B cell (primary cell): ENCODE measurements at regions of chr10 and their contacts with region 1.

Region 1: DNA sequence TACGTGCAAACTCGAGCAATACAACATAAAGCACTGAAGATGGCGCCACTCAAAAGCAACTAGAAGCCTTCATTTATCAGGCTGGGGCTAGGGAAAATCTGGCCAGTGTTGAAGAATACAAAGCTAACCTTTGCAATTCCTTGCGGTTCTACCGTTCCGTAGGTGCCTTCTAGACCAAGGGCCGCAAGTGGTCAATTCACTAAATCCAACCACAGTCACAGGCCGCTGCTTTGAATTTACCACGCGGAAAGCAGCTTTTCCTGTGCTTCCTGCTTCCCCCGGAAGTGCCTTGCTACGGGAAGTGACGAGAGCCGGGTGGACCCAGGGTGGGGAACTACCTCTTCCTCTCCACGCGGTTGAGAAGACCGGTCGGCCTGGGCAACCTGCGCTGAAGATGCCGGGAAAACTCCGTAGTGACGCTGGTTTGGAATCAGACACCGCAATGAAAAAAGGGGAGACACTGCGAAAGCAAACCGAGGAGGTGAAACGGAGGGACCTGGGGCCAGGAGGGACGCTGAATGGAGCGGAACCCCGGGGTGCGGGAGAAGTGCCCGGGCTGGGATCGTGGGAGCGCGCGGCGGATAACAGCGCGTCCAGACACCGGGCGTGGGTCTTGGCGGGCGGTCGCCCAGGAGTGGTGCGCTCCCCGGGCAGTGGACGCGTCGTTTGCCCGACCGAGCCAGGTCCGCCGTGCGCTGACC is at the start of gene DDX21:
- DNase-seq: peak; percentile 93
- ATAC-seq: peak; percentile 82
- H3K4me3 ChIP-seq: peak within 1 kb of the TSS; percentile 92 to 99 (median 95)
- H3K4me3 Mint-ChIP-seq: peak within 1 kb of the TSS; percentile 94
- H3K27ac ChIP-seq: peak within 1 kb of the TSS; percentile 97 to 99
- H3K27ac Mint-ChIP-seq: peak within 1 kb of the TSS; percentile 95
- H3K4me1 ChIP-seq: peaks cover 7 to 32% of the 10 kb centered on the region in 2 donors
- H3K4me1 Mint-ChIP-seq: peaks cover 34% of the 10 kb centered on the region
- H3K27me3 ChIP-seq: no peaks in the 10 kb centered on the region
- H3K27me3 Mint-ChIP-seq: no peaks in the 10 kb centered on the region
- CTCF ChIP-seq: peak; percentile 88
- total RNA-seq, gene DDX21: 40.5 and 43.5 TPM in 2 replicates

Region 2: GRCh38 chr10:68331455-68332258 is 624.3 kb before region 1 on chr10 and contains the start of gene HNRNPH3:
- CTCF ChIA-PET with region 1: no interaction called
- POLR2A ChIA-PET with region 1: interaction called, 3 read pairs
- intact Hi-C with region 1: loop called (anchors 1 kb)
- DNase-seq: peak; percentile 100
- ATAC-seq: peak; percentile 84
- H3K4me3 ChIP-seq: peak within 1 kb of the TSS; percentile 77 to 95 (median 90)
- H3K4me3 Mint-ChIP-seq: peak within 1 kb of the TSS; percentile 99
- H3K27ac ChIP-seq: peak within 1 kb of the TSS; percentile 93 to 94
- H3K27ac Mint-ChIP-seq: peak within 1 kb of the TSS; percentile 100
- H3K4me1 ChIP-seq: peaks cover 42 to 51% of the 10 kb centered on the region in 2 donors
- H3K4me1 Mint-ChIP-seq: peaks cover 62% of the 10 kb centered on the region
- H3K27me3 ChIP-seq: no peaks in the 10 kb centered on the region
- H3K27me3 Mint-ChIP-seq: no peaks in the 10 kb centered on the region
- CTCF ChIP-seq: no peak
- total RNA-seq, gene HNRNPH3: 120 and 124 TPM in 2 replicates

Region 3: GRCh38 chr10:68720793-68721672 is 234.9 kb before region 1 on chr10 and contains the start of gene CCAR1:
- CTCF ChIA-PET with region 1: no interaction called
- POLR2A ChIA-PET with region 1: no interaction called
- intact Hi-C with region 1: loop called (anchors 2 kb)
- DNase-seq: peak; percentile 99
- ATAC-seq: peak; percentile 97
- H3K4me3 ChIP-seq: peak within 1 kb of the TSS; percentile 58 to 96 (median 93)
- H3K4me3 Mint-ChIP-seq: peak within 1 kb of the TSS; percentile 96
- H3K27ac ChIP-seq: peak within 1 kb of the TSS; percentile 81 to 95
- H3K27ac Mint-ChIP-seq: peak within 1 kb of the TSS; percentile 97
- H3K4me1 ChIP-seq: peaks cover 10 to 15% of the 10 kb centered on the region in 2 donors
- H3K4me1 Mint-ChIP-seq: peaks cover 17% of the 10 kb centered on the region
- H3K27me3 ChIP-seq: no peaks in the 10 kb centered on the region
- H3K27me3 Mint-ChIP-seq: no peaks in the 10 kb centered on the region
- CTCF ChIP-seq: no peak
- total RNA-seq, gene CCAR1: 98.9 and 101 TPM in 2 replicates

Region 4: GRCh38 chr10:68988530-68989316 is 32.7 kb after region 1 on chr10 and contains the start of gene KIFBP:
- CTCF ChIA-PET with region 1: interaction called, 6 read pairs
- POLR2A ChIA-PET with region 1: interaction called, 4 read pairs
- intact Hi-C with region 1: loop called (anchors 1 kb)
- DNase-seq: peak; percentile 92
- ATAC-seq: peak; percentile 87
- H3K4me3 ChIP-seq: peak within 1 kb of the TSS; percentile 67 to 90 (median 79)
- H3K4me3 Mint-ChIP-seq: peak within 1 kb of the TSS; percentile 95
- H3K27ac ChIP-seq: peak within 1 kb of the TSS in 1 of 2 donors; percentile 59
- H3K27ac Mint-ChIP-seq: peak within 1 kb of the TSS; percentile 91
- H3K4me1 ChIP-seq: peaks cover 18 to 20% of the 10 kb centered on the region in 2 donors
- H3K4me1 Mint-ChIP-seq: peaks cover 40% of the 10 kb centered on the region
- H3K27me3 ChIP-seq: no peaks in the 10 kb centered on the region
- H3K27me3 Mint-ChIP-seq: no peaks in the 10 kb centered on the region
- CTCF ChIP-seq: peak; percentile 32
- total RNA-seq, gene KIFBP: 13.5 and 15.7 TPM in 2 replicates

Region 5: GRCh38 chr10:69092959-69093850 is 137.2 kb after region 1 on chr10:
- CTCF ChIA-PET with region 1: interaction called, 47 read pairs
- POLR2A ChIA-PET with region 1: interaction called, 7 read pairs
- intact Hi-C with region 1: loop called (anchors 1 kb)
- DNase-seq: peak; percentile 90
- ATAC-seq: peak; percentile 73
- H3K4me3 ChIP-seq: peak overlapping the region in 1 of 5 experiments; percentile 8
- H3K4me3 Mint-ChIP-seq: no peak overlapping the region
- H3K27ac ChIP-seq: no peak overlapping the region
- H3K27ac Mint-ChIP-seq: no peak overlapping the region
- H3K4me1 ChIP-seq: peaks cover 36 to 37% of the 10 kb centered on the region in 2 donors
- H3K4me1 Mint-ChIP-seq: peaks cover 39% of the 10 kb centered on the region
- H3K27me3 ChIP-seq: no peaks in the 10 kb centered on the region
- H3K27me3 Mint-ChIP-seq: no peaks in the 10 kb centered on the region
- CTCF ChIP-seq: peak; percentile 83

Region 6: GRCh38 chr10:69318106-69318866 is 362.3 kb after region 1 on chr10:
- CTCF ChIA-PET with region 1: no interaction called
- POLR2A ChIA-PET with region 1: no interaction called
- intact Hi-C with region 1: loop called (anchors 5 kb)
- DNase-seq: peak; percentile 93
- ATAC-seq: peak; percentile 93
- H3K4me3 ChIP-seq: peak overlapping the region; percentile 3 to 98 (median 94)
- H3K4me3 Mint-ChIP-seq: peak overlapping the region; percentile 96
- H3K27ac ChIP-seq: peak overlapping the region; percentile 82 to 85
- H3K27ac Mint-ChIP-seq: peak overlapping the region; percentile 91
- H3K4me1 ChIP-seq: peaks cover 22 to 31% of the 10 kb centered on the region in 2 donors
- H3K4me1 Mint-ChIP-seq: peaks cover 37% of the 10 kb centered on the region
- H3K27me3 ChIP-seq: no peaks in the 10 kb centered on the region
- H3K27me3 Mint-ChIP-seq: no peaks in the 10 kb centered on the region
- CTCF ChIP-seq: no peak